ENCODE measurements at regions of chr11 and their contacts with region 1.

Region 1: DNA sequence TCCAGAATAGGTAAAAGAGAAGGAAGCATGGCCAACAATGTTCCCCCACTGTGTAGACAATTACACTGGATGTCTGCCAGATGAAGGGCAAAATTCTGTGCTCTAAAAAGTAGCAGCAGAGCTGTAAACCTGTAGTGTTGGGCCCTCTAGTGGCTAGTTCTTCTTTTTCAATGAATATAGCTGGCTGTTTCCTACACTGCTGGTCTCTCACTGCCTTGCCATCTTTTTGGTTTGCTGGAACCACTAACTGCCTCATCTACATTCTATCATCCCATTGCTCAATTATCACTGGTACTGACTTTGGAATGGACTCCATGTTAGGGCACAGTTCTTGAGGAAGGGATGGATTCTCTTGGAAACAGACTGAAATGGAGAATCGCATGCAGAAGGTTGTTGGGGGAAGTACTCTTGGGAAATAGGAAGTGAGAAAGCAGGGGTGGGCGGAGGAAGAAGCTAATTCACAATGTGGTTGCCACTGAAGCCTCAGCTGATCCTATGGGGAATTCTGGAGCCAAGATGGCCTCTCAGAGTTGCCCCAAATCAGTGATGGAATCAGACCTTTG is 17.9 kb downstream of the KCNE3 start:
- DNase-seq: peak; percentile 16
- H3K4me3 ChIP-seq: no peak overlapping the region
- H3K27me3 ChIP-seq: peaks cover 3% of the 10 kb centered on the region
- CTCF ChIP-seq: peak; percentile 69

Region 2: DNA sequence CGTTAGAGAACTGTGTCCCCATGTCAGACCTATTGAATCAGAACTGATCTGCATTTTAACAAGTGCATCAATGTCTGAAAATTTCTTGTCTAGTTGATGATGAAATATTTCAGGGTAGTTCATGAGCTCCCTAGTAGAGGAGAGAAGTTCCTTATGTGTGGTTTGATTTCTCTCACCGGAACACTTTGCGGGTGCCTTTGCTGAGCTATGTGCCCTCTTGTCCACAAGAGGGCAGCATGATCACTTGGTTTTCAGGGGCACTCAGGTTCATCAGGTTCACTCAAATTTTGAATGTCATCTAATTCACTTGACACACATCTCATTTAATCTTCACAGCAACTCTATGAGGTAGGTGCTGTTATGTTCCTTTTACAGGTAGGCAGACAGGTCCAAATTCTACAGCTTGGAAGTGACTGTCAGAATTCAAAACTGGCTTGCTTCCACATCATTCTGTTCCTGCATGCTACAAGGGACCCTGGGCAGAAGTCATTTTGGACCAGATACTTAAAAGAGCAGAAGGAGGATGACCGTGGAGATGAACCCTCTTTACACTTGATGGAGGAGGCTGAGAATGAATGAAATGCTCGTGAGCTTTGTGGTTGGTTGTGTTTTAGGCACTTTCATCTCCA is 193.6 kb before region 1 on chr11:
- CTCF ChIA-PET with region 1: interaction called, 300 read pairs
- POLR2A ChIA-PET with region 1: no interaction called
- DNase-seq: no peak
- H3K4me3 ChIP-seq: no peak overlapping the region
- H3K27me3 ChIP-seq: no peaks in the 10 kb centered on the region
- CTCF ChIP-seq: peak; percentile 90

Region 3: DNA sequence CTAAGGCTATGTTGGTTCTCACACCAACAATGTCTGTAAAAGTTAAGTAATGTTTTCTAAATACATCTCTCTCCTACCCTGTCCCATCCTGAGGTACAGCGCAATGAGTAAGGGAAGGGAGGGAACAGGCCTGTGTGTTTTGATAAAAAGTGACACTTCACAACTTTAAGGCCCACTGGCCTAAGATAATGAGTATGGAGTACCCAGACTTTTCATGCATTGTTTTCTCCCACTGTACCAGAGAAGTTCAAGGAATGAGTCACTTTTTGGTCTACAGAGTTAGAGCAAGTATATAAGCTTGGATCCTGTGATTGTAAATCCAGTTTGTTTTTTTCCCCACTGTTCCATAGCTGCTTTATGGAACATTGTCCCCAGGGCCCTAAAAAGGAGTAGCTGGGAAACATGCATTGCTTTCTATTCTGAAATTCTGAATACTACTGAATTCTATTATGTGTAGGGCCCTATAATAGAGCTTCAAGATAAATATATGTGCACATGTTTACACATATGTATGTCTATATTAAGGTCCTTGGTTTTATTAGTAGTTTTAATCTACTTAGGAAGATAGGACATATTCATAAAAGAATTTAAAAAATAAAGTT is 11.9 kb before region 1 on chr11:
- CTCF ChIA-PET with region 1: interaction called, 11 read pairs
- POLR2A ChIA-PET with region 1: no interaction called
- DNase-seq: no peak
- H3K4me3 ChIP-seq: no peak overlapping the region
- H3K27me3 ChIP-seq: no peaks in the 10 kb centered on the region
- CTCF ChIP-seq: no peak

Region 4: DNA sequence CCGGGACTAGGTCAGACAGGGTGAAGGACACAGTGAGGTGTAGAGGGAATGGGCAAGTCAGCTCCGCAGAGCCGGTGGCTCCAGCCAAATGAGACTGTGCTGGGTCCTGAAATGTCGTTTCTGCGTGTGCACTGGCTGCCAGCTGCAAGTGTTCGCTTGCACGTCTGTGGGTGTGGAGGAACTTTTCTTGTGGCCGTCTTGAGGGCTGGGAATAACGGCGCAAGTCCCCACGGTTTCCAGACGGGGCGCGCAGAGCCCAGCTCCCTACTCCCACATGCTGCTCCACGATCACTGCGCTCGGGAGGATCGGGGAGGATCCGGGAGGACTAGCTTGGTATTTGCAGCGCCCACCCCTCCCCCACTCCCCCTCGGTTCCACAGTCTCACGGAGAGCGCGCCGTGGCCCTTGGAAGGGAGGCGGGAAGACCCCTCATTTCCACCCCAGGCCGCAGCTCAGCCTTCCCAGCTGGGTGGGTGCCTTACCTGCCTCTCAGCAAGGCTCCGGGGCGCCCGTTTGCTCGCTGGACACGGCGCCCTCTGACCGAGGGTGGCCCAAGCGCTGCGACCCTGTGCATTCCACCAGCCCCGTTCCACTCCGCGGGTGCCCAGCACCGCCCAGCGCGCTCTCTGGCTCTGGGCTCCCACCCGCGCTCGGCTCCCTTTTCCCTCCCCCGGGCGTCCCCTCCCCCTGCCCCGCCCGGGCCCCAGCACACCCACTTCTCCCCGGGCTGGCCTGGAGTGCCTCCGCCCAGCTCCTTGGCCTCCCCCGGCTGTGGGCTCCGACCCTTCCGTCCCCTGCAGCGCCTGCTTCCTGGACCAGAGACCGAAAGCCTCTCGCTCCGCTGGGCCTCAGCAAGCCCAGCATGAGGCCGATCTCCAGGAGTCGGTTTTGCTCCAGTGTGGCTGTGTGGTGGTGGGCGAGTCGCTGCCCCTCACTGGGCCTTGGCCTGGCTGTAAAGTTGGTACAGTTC is 17.8 kb after region 1 on chr11 and contains the start of gene KCNE3:
- CTCF ChIA-PET with region 1: interaction called, 31 read pairs
- POLR2A ChIA-PET with region 1: no interaction called
- DNase-seq: no peak
- H3K4me3 ChIP-seq: peak within 1 kb of the TSS; percentile 39
- H3K27me3 ChIP-seq: peaks cover 22% of the 10 kb centered on the region
- CTCF ChIP-seq: no peak
- polyA plus RNA-seq, gene KCNE3: 0.72 and 0.94 TPM in 2 replicates

Region 5: DNA sequence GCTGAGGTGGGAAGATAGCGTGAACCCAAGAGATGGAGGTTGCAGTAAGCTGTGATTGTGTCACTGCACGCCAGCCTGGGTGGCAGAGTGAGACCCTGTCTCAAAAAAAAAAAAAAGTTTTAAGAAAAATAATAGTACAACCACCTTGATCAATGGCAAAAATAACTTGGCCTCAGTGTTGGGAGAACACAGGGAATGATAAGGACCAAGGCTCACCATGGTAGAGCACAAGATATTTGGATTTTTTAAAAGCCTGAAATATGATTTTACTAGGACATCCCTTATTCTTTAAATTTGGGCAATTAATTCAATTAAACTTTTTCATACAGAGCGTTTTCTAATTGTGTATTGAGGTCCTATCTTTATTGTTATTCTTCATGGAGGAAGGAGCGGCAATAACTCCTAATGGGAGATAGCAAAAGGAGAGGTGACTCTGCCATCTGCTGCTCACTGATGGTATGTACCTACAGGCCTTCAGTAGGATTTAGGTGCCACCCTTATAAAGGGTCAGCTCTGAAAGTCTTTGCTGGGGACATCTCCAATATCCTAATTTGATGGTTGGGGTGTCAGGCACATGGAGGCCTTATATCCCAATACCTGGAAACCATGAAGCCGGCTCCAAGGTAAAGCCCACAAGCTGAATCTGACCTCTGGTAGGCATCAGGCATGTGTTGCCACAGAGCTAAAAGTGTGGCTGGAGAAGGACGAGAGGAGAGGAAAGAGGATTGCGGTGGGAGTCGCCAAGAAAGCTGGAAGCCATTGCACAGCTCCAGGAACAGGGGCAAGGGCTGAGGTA is 121.0 kb after region 1 on chr11:
- CTCF ChIA-PET with region 1: interaction called, 181 read pairs
- POLR2A ChIA-PET with region 1: no interaction called
- DNase-seq: no peak
- H3K4me3 ChIP-seq: no peak overlapping the region
- H3K27me3 ChIP-seq: peaks cover 9% of the 10 kb centered on the region
- CTCF ChIP-seq: peak; percentile 66

Region 6: GRCh38 chr11:74641289-74641688 is 191.8 kb after region 1 on chr11:
- CTCF ChIA-PET with region 1: no interaction called
- POLR2A ChIA-PET with region 1: no interaction called
- DNase-seq: no peak
- H3K4me3 ChIP-seq: no peak overlapping the region
- H3K27me3 ChIP-seq: no peaks in the 10 kb centered on the region
- CTCF ChIP-seq: no peak

Region 7: GRCh38 chr11:74710281-74710938 is 261.0 kb after region 1 on chr11:
- CTCF ChIA-PET with region 1: no interaction called
- POLR2A ChIA-PET with region 1: no interaction called
- DNase-seq: no peak
- H3K4me3 ChIP-seq: no peak overlapping the region
- H3K27me3 ChIP-seq: no peaks in the 10 kb centered on the region; the same call in 1 of the 2 replicates
- CTCF ChIP-seq: no peak

Region 8: DNA sequence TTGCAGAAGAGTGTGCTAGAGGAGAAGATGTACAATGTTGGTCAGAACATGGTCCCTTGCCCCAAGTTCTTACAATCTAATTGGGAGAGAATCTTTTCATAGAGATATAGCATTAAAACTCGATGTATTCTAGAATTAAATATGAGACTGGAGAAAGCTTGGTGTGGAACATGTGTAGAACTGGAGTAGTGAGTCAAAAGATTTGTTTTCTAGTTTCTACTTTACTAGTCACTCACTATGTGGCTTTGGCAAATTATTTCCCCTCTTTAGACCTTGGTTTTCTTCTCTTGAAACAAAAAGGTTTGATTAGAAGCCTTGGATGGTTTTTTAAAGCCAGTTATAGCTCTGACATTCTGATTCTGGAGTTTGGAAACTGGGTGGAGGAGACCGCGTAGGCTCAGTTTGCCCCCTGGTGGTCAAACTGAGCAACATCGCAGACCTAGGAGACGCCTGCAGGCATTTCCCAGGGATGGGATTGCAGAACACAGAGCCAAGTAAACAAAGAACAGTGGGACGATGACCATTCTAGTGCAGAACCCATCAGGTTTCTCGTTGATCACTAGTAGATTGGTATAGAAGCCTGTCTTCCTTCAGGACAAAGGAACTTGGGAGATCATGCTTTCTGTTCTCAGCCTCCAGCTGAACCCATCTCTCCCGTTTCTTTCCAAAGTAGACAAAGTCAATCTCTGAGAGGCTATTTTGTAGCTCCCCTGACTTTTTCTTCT is 290.3 kb after region 1 on chr11:
- CTCF ChIA-PET with region 1: interaction called, 19 read pairs
- POLR2A ChIA-PET with region 1: no interaction called
- DNase-seq: no peak
- H3K4me3 ChIP-seq: no peak overlapping the region
- H3K27me3 ChIP-seq: peaks cover 9% of the 10 kb centered on the region
- CTCF ChIP-seq: peak; percentile 91